CD4-positive, alpha-beta memory T cell (primary cell): ENCODE measurements at regions of chr1 and their contacts with region 1.

Region 1: DNA sequence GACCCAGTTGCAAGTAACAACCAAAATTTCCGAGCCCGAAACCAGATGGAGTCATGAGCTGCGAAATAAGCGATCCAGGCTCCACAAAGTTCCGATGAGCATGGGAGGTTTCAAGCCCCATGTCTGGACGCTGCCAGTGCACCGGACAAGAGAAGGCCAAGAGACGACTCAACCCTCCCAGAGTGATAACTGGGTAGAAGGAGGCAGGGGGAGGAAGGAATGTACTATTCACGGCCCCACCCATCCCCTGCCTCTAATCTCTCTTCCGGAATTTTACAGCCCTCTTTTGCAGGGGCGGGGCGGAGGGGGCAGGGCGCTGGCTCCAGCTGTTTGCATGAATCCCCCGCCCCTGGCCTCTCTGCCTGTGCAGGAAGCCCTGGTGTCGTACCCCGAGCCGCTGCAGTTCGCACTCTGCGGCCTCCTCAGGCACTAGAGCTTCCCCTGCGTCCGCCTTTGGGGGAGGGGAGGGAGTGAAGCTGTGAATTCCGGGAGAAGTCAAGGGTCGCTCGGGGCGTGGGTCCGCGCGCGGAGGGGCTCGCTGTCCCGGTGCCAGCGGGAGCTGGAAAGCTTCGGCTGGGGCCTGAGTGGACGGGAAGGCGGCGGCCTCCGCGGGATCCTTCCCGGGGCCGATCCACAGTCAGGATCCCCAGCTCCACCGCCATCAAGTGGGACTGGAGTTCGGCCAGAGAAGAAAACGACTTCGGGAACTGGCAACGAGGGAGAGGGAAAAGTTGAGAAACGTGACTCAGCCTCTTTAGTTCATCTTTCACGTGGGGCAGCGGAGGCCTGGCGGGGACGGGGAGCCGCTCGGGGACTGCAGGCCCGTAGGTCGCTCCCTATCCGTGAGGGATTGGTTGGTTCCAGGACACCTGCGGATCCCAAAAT is 6.3 kb upstream of the PTP4A2 start:
- DNase-seq: peak; percentile 78 to 89 (median 81)
- H3K4me3 ChIP-seq: peak overlapping the region; percentile 53 to 86
- H3K4me3 Mint-ChIP-seq: peak overlapping the region; percentile 82 to 95 (median 88)
- H3K27ac ChIP-seq: peak overlapping the region; percentile 80
- H3K27ac Mint-ChIP-seq: peak overlapping the region; percentile 91 to 98 (median 97)
- H3K4me1 ChIP-seq: peaks cover 73% of the 10 kb centered on the region
- H3K4me1 Mint-ChIP-seq: peaks cover 33 to 71% (median 50%) of the 10 kb centered on the region in 4 donors
- H3K27me3 ChIP-seq: no peaks in the 10 kb centered on the region
- H3K27me3 Mint-ChIP-seq: no peaks in the 10 kb centered on the region

Region 2: GRCh38 chr1:31815752-31816500 is 128.5 kb before region 1 on chr1 and contains the start of gene SPOCD1:
- CTCF ChIA-PET with region 1: interaction called, 11 read pairs
- POLR2A ChIA-PET with region 1: interaction called, 10 read pairs
- intact Hi-C with region 1: loop called (anchors 1 kb)
- DNase-seq: peak; percentile 78 to 84 (median 79)
- H3K4me3 ChIP-seq: no peak within 1 kb of the TSS
- H3K4me3 Mint-ChIP-seq: peak within 1 kb of the TSS in 2 of 8 donors; percentile 1 to 64
- H3K27ac ChIP-seq: no peak within 1 kb of the TSS
- H3K27ac Mint-ChIP-seq: peak within 1 kb of the TSS; percentile 32 to 88 (median 42)
- H3K4me1 ChIP-seq: peaks cover 8% of the 10 kb centered on the region
- H3K4me1 Mint-ChIP-seq: peaks cover 8 to 21% (median 14%) of the 10 kb centered on the region in 4 donors
- H3K27me3 ChIP-seq: no peaks in the 10 kb centered on the region
- H3K27me3 Mint-ChIP-seq: peaks cover 0 to 1% of the 10 kb centered on the region in 2 donors
- total RNA-seq, gene SPOCD1: 0.61 to 0.94 TPM

Region 3: GRCh38 chr1:31848381-31848897 is 96.0 kb before region 1 on chr1:
- CTCF ChIA-PET with region 1: no interaction called
- POLR2A ChIA-PET with region 1: interaction called, 13 read pairs
- intact Hi-C with region 1: no loop called
- DNase-seq: peak; percentile 47 to 66 (median 65)
- H3K4me3 ChIP-seq: peak overlapping the region; percentile 7 to 51
- H3K4me3 Mint-ChIP-seq: peak overlapping the region; percentile 61 to 88 (median 78)
- H3K27ac ChIP-seq: peak overlapping the region; percentile 16
- H3K27ac Mint-ChIP-seq: peak overlapping the region; percentile 65 to 96 (median 90)
- H3K4me1 ChIP-seq: peaks cover 48% of the 10 kb centered on the region
- H3K4me1 Mint-ChIP-seq: peaks cover 43 to 62% (median 51%) of the 10 kb centered on the region in 4 donors
- H3K27me3 ChIP-seq: no peaks in the 10 kb centered on the region
- H3K27me3 Mint-ChIP-seq: no peaks in the 10 kb centered on the region

Region 4: DNA sequence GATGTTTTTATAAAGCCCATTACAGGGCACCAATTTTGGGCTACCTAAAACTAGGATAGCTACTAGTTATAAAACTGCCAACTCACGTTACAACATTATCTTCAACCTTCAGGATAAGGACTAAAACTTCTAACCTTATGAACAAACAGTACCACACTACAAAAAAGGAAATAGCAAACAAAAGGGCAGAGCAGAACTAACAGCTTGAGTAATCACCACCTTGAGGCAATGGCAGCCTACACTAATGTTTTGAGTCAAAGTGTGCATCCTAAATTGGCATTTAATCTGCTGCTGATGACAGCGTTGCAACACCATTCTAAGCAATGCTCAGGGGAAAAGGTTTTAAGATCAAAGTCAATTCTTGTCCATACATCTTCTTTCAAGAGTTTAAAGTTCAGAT is 33.5 kb before region 1 on chr1:
- CTCF ChIA-PET with region 1: interaction called, 3 read pairs
- POLR2A ChIA-PET with region 1: interaction called, 12 read pairs
- intact Hi-C with region 1: no loop called
- DNase-seq: no peak
- H3K4me3 ChIP-seq: no peak overlapping the region
- H3K4me3 Mint-ChIP-seq: peak overlapping the region in 4 of 8 donors; percentile 7 to 22 (median 20)
- H3K27ac ChIP-seq: peak overlapping the region; percentile 37
- H3K27ac Mint-ChIP-seq: peak overlapping the region; percentile 0 to 86 (median 69)
- H3K4me1 ChIP-seq: peaks cover 50% of the 10 kb centered on the region
- H3K4me1 Mint-ChIP-seq: peaks cover 33 to 53% (median 45%) of the 10 kb centered on the region in 4 donors
- H3K27me3 ChIP-seq: no peaks in the 10 kb centered on the region
- H3K27me3 Mint-ChIP-seq: no peaks in the 10 kb centered on the region

Region 5: GRCh38 chr1:31955917-31956736 is 11.7 kb after region 1 on chr1:
- CTCF ChIA-PET with region 1: interaction called, 208 read pairs
- POLR2A ChIA-PET with region 1: interaction called, 545 read pairs
- intact Hi-C with region 1: loop called (anchors 1 kb)
- DNase-seq: peak; percentile 72 to 93 (median 76)
- H3K4me3 ChIP-seq: no peak overlapping the region
- H3K4me3 Mint-ChIP-seq: peak overlapping the region in 7 of 8 donors; percentile 70 to 86 (median 78)
- H3K27ac ChIP-seq: peak overlapping the region; percentile 78
- H3K27ac Mint-ChIP-seq: peak overlapping the region; percentile 91 to 96 (median 93)
- H3K4me1 ChIP-seq: peaks cover 70% of the 10 kb centered on the region
- H3K4me1 Mint-ChIP-seq: peaks cover 49 to 85% (median 63%) of the 10 kb centered on the region in 4 donors
- H3K27me3 ChIP-seq: no peaks in the 10 kb centered on the region
- H3K27me3 Mint-ChIP-seq: no peaks in the 10 kb centered on the region

Region 6: DNA sequence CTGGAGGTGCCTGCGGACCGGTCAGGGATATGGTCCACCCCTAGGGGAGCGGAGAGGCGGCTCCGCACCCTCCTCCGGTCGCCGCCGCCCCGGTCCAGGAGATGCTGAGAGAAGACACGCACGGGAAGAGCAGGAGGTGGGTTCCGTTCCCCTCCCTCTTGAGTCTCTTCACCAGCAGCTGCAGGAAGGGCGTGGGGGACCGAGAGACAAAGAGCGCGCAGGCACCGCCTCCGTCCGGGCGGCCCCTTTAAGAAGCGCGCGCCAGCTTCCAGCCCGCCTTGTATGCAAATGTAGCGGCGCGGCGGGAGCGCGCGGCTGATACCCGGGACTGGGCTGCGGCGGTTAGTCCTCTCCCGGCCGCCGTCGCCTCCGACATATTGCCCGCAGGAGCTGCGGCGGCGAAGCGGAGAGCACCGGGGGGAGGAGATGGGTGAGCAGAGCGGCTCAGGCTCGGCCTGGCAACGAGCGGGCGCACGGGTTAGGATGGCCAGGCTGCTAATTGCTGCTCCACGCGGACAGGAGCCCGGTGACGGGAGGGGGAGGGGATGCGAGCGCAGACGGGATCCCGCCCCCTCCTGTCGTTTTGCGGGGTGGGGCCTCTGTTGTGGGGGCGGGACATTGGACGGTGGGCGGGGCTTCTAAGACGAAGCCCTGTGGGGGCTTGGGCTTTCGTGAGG is 128.3 kb after region 1 on chr1 and contains the start of gene TMEM39B:
- CTCF ChIA-PET with region 1: no interaction called
- POLR2A ChIA-PET with region 1: interaction called, 19 read pairs
- intact Hi-C with region 1: no loop called
- DNase-seq: peak; percentile 94 to 97 (median 96)
- H3K4me3 ChIP-seq: peak within 1 kb of the TSS; percentile 95
- H3K4me3 Mint-ChIP-seq: peak within 1 kb of the TSS; percentile 84 to 98 (median 92)
- H3K27ac ChIP-seq: peak within 1 kb of the TSS; percentile 73
- H3K27ac Mint-ChIP-seq: peak within 1 kb of the TSS; percentile 80 to 99 (median 97)
- H3K4me1 ChIP-seq: peaks cover 35% of the 10 kb centered on the region
- H3K4me1 Mint-ChIP-seq: peaks cover 26 to 52% (median 41%) of the 10 kb centered on the region in 4 donors
- H3K27me3 ChIP-seq: no peaks in the 10 kb centered on the region
- H3K27me3 Mint-ChIP-seq: no peaks in the 10 kb centered on the region
- total RNA-seq, gene TMEM39B: 18.4 to 19.1 TPM